ENCODE measurements at regions of chr15 and their contacts with region 1.

Region 1: DNA sequence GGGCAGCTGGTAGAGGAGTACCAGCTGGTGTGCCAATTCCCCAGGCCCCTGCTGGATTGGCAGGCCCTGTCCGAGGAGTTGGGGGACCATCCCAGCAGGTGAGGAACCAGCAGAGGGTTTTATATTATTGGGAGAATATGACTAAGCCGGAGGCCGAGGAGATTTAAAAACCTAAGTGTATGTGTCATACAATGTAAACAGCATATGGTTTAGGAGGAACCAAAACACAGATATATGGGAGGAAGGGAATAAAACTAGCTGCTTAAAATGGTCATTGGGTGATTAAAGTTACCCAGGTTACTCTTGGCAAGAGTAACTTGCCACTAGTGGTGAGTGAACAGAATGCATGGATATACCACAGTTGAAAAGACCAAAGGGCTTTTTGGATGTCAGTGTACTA is 22.1 kb downstream of the SNRPN start:
- DNase-seq: no peak
- H3K4me3 ChIP-seq: no peak overlapping the region
- H3K27ac ChIP-seq: no peak overlapping the region
- H3K4me1 ChIP-seq: no peaks in the 10 kb centered on the region
- H3K27me3 ChIP-seq: no peaks in the 10 kb centered on the region
- CTCF ChIP-seq: no peak
- EP300 ChIP-seq: no peak
- POLR2A ChIP-seq: no peak

Region 2: DNA sequence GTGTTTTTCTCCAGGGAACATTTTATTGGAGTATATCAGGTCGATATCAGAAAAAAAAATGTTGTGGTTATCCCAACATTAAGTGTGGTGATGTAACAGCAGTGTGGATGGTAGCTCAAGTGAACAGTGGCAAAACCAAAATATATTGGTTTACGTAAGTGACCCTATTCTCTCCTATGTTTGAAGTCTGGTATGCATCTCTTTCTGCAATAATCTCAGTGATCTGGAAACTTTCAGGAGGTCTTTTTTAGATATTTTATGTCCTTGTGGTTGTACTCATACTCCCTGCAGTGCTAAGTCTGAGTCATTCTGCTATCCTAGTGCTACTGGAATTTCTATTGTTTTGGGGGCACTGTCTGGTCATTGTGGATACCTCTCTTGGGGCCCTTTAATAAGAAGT is 115.7 kb after region 1 on chr15:
- intact Hi-C with region 1: loop called (anchors 10 kb)
- DNase-seq: no peak
- H3K4me3 ChIP-seq: no peak overlapping the region
- H3K27ac ChIP-seq: no peak overlapping the region
- H3K4me1 ChIP-seq: no peaks in the 10 kb centered on the region
- H3K27me3 ChIP-seq: no peaks in the 10 kb centered on the region
- CTCF ChIP-seq: no peak
- EP300 ChIP-seq: no peak
- POLR2A ChIP-seq: no peak